ENCODE measurements at regions of chr17 and their contacts with region 1.

Region 1: GRCh38 chr17:39754161-39754951 is 16.6 kb downstream of the GRB7 start:
- DNase-seq: peak; percentile 97
- ATAC-seq: peak; percentile 81
- H3K4me3 Mint-ChIP-seq: peak overlapping the region; percentile 76
- H3K27ac Mint-ChIP-seq: peak overlapping the region; percentile 90
- H3K4me1 Mint-ChIP-seq: peaks cover 65% of the 10 kb centered on the region
- H3K27me3 Mint-ChIP-seq: no peaks in the 10 kb centered on the region
- CTCF ChIP-seq: peak; percentile 96

Region 2: GRCh38 chr17:39547713-39548478 is 206.5 kb before region 1 on chr17:
- CTCF ChIA-PET with region 1: interaction called, 11 read pairs
- POLR2A ChIA-PET with region 1: no interaction called
- intact Hi-C with region 1: no loop called
- DNase-seq: peak; percentile 87
- ATAC-seq: peak; percentile 87
- H3K4me3 Mint-ChIP-seq: no peak overlapping the region
- H3K27ac Mint-ChIP-seq: no peak overlapping the region
- H3K4me1 Mint-ChIP-seq: no peaks in the 10 kb centered on the region
- H3K27me3 Mint-ChIP-seq: no peaks in the 10 kb centered on the region
- CTCF ChIP-seq: peak; percentile 98

Region 3: GRCh38 chr17:39663688-39664616 is 90.4 kb before region 1 on chr17:
- CTCF ChIA-PET with region 1: no interaction called
- POLR2A ChIA-PET with region 1: no interaction called
- intact Hi-C with region 1: no loop called
- DNase-seq: no peak
- ATAC-seq: no peak
- H3K4me3 Mint-ChIP-seq: no peak overlapping the region
- H3K27ac Mint-ChIP-seq: no peak overlapping the region
- H3K4me1 Mint-ChIP-seq: peaks cover 12% of the 10 kb centered on the region
- H3K27me3 Mint-ChIP-seq: peaks cover 9% of the 10 kb centered on the region
- CTCF ChIP-seq: no peak

Region 4: GRCh38 chr17:39687811-39688518 is 66.4 kb before region 1 on chr17 and contains the start of gene PGAP3:
- CTCF ChIA-PET with region 1: no interaction called
- POLR2A ChIA-PET with region 1: no interaction called
- intact Hi-C with region 1: no loop called
- DNase-seq: peak; percentile 96
- ATAC-seq: peak; percentile 97
- H3K4me3 Mint-ChIP-seq: peak within 1 kb of the TSS; percentile 93
- H3K27ac Mint-ChIP-seq: peak within 1 kb of the TSS; percentile 93
- H3K4me1 Mint-ChIP-seq: peaks cover 20% of the 10 kb centered on the region
- H3K27me3 Mint-ChIP-seq: no peaks in the 10 kb centered on the region
- CTCF ChIP-seq: no peak
- total RNA-seq, gene PGAP3: 6.4 to 7.4 TPM

Region 5: DNA sequence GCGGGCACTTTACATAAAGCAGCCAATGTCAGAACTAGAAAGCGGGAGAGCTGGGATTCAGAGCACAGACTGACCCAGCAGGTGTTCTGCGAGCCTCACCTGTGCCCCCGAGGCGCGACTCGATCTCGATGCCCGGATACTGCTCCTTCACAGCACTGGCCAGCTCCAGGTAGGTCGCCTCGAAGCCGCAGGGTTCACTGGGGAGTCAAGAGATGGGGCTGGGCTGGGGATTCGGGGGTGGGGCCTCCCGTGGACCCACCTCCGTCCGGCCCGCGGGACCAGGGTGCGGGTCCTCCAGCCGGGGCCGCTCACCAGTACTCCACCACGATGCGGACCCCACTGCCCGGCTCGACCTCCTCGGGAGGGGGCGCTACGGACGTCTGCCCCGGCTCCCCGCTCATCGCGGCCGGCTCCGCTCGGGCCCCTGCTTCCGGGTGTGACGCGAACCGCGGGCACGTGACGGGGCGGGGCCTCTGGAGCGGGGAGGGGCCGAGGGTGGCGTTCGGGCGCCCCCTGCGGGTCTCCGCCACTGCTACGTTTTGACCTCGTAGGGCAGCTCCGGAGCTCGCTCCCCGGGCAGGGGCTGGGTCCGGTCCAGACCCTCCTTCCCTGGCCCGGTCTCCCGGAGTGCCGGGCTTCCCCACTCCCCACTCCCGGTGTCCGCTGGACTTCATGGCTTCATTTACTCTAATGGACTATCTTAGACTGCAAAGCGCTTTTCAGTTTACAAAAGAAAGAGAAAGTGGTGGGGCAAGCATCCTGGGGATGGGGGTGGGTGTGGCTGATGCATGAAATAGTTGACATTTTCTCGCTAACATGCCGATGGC is 24.0 kb before region 1 on chr17 and contains the start of gene MIEN1:
- CTCF ChIA-PET with region 1: interaction called, 52 read pairs
- POLR2A ChIA-PET with region 1: interaction called, 16 read pairs
- intact Hi-C with region 1: no loop called
- DNase-seq: peak; percentile 94
- ATAC-seq: peak; percentile 96
- H3K4me3 Mint-ChIP-seq: peak within 1 kb of the TSS; percentile 93
- H3K27ac Mint-ChIP-seq: peak within 1 kb of the TSS; percentile 91
- H3K4me1 Mint-ChIP-seq: peaks cover 17% of the 10 kb centered on the region
- H3K27me3 Mint-ChIP-seq: no peaks in the 10 kb centered on the region
- CTCF ChIP-seq: peak; percentile 99
- total RNA-seq, gene MIEN1: 32.5 to 34.0 TPM

Region 6: GRCh38 chr17:39777534-39778365 is 23.4 kb after region 1 on chr17:
- CTCF ChIA-PET with region 1: interaction called, 22 read pairs
- POLR2A ChIA-PET with region 1: interaction called, 23 read pairs
- intact Hi-C with region 1: no loop called
- DNase-seq: peak; percentile 28
- ATAC-seq: peak; percentile 67
- H3K4me3 Mint-ChIP-seq: peak overlapping the region; percentile 70
- H3K27ac Mint-ChIP-seq: peak overlapping the region; percentile 85
- H3K4me1 Mint-ChIP-seq: peaks cover 83% of the 10 kb centered on the region
- H3K27me3 Mint-ChIP-seq: no peaks in the 10 kb centered on the region
- CTCF ChIP-seq: no peak

Region 7: DNA sequence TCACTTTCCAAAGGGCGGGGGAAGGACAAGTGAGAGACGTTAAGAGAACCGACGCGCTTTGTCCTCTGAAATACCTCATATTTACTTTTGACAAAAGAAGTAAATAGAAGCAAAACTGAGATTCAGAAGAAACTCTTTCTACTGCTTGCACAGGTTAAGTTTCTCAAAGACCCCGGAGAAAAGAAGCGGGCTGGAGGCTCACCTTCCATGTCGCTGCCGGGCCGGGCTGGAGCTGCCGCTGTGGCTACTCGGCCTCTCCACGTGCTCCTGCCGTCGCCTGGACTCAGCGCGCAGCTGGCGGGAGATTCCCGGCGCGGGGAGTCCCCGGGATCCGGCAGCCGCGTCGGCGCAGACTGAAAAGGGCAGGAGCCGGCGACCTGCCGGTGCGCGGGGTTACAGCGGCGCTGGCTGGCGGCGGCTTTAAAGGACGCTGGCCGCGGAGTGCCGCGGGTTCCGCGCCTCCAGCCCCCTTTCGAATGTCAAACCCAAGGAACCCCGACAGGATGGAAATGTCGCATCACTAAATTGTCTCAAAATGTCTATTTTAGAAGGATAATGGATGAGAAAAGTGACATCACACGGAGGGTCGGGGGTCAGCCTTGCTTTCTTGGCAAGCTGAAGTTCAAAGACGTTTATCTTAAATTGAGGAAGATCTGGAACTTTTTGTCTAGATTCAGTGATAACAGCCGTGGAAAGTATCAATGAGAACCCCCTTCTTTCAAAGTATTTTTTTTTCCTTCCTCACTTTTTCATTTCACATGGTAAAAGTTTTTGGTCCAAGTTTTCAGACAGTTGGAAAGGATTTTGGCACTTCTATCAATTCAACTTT is 109.8 kb after region 1 on chr17 and contains the start of gene IKZF3:
- CTCF ChIA-PET with region 1: interaction called, 15 read pairs
- POLR2A ChIA-PET with region 1: interaction called, 25 read pairs
- intact Hi-C with region 1: loop called (anchors 1 kb)
- DNase-seq: peak; percentile 90
- ATAC-seq: peak; percentile 60
- H3K4me3 Mint-ChIP-seq: peak within 1 kb of the TSS; percentile 85
- H3K27ac Mint-ChIP-seq: peak within 1 kb of the TSS; percentile 90
- H3K4me1 Mint-ChIP-seq: peaks cover 48% of the 10 kb centered on the region
- H3K27me3 Mint-ChIP-seq: no peaks in the 10 kb centered on the region
- CTCF ChIP-seq: no peak
- total RNA-seq, gene IKZF3: 52.1 to 52.2 TPM